ENCODE measurements at regions of chr7 and their contacts with region 1.

Region 1: DNA sequence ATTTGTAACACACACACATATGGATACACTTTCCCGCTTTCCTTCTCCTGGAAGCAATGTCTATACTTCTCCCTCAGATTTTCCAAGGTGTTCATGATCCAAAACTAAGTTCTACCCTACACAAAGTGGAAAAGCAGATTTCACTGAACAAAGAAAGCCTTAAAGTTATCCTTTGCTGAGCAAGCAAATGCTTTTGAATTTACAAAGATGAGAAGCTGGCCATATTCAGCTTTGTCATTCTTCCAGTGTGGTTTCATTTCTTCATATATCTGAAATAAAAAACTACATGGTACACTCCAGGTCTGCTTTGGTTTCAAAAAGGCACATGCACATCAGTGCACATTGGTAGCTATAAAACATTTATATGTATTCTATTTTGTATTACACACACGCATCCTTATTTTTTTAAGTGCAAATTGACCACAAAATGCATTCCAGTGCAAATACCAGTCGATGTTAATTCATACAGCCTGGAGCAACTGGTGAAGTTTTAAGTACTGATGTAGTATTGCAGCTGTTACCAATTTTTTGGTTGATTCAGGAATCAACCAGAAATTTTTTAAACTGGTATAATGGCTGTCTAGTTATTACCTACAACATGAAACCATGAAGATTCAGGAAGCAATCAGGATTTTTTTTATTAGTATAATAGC is 65.5 kb upstream of the SRPK2 start:
- DNase-seq: no peak
- ATAC-seq: no peak
- H3K4me3 ChIP-seq: no peak overlapping the region
- H3K4me3 Mint-ChIP-seq: no peak overlapping the region
- H3K27ac ChIP-seq: no peak overlapping the region
- H3K27ac Mint-ChIP-seq: no peak overlapping the region
- H3K4me1 ChIP-seq: peaks cover 3 to 6% of the 10 kb centered on the region in 2 experiments
- H3K4me1 Mint-ChIP-seq: peaks cover 11 to 14% (median 13%) of the 10 kb centered on the region in 3 donors
- H3K27me3 ChIP-seq: no peaks in the 10 kb centered on the region
- H3K27me3 Mint-ChIP-seq: no peaks in the 10 kb centered on the region

Region 2: GRCh38 chr7:105141068-105141467 is 313.2 kb before region 1 on chr7:
- CTCF ChIA-PET with region 1: no interaction called
- POLR2A ChIA-PET with region 1: interaction called in 1 of 2 experiments, 10 read pairs
- DNase-seq: peak in 1 of 35 experiments; percentile 27
- ATAC-seq: no peak
- H3K4me3 ChIP-seq: no peak overlapping the region
- H3K4me3 Mint-ChIP-seq: no peak overlapping the region
- H3K27ac ChIP-seq: no peak overlapping the region
- H3K27ac Mint-ChIP-seq: no peak overlapping the region
- H3K4me1 ChIP-seq: no peaks in the 10 kb centered on the region
- H3K4me1 Mint-ChIP-seq: peaks cover 6 to 14% (median 11%) of the 10 kb centered on the region in 3 donors
- H3K27me3 ChIP-seq: no peaks in the 10 kb centered on the region
- H3K27me3 Mint-ChIP-seq: no peaks in the 10 kb centered on the region

Region 3: GRCh38 chr7:105470846-105471245 is 16.6 kb after region 1 on chr7:
- CTCF ChIA-PET with region 1: no interaction called
- POLR2A ChIA-PET with region 1: no interaction called
- DNase-seq: no peak
- ATAC-seq: no peak
- H3K4me3 ChIP-seq: no peak overlapping the region
- H3K4me3 Mint-ChIP-seq: no peak overlapping the region
- H3K27ac ChIP-seq: no peak overlapping the region
- H3K27ac Mint-ChIP-seq: no peak overlapping the region
- H3K4me1 ChIP-seq: no peaks in the 10 kb centered on the region
- H3K4me1 Mint-ChIP-seq: no peaks in the 10 kb centered on the region
- H3K27me3 ChIP-seq: no peaks in the 10 kb centered on the region
- H3K27me3 Mint-ChIP-seq: no peaks in the 10 kb centered on the region

Measured in T-cell (primary cell).